ENCODE measurements at regions of chr19 and their contacts with region 1.

Region 1: DNA sequence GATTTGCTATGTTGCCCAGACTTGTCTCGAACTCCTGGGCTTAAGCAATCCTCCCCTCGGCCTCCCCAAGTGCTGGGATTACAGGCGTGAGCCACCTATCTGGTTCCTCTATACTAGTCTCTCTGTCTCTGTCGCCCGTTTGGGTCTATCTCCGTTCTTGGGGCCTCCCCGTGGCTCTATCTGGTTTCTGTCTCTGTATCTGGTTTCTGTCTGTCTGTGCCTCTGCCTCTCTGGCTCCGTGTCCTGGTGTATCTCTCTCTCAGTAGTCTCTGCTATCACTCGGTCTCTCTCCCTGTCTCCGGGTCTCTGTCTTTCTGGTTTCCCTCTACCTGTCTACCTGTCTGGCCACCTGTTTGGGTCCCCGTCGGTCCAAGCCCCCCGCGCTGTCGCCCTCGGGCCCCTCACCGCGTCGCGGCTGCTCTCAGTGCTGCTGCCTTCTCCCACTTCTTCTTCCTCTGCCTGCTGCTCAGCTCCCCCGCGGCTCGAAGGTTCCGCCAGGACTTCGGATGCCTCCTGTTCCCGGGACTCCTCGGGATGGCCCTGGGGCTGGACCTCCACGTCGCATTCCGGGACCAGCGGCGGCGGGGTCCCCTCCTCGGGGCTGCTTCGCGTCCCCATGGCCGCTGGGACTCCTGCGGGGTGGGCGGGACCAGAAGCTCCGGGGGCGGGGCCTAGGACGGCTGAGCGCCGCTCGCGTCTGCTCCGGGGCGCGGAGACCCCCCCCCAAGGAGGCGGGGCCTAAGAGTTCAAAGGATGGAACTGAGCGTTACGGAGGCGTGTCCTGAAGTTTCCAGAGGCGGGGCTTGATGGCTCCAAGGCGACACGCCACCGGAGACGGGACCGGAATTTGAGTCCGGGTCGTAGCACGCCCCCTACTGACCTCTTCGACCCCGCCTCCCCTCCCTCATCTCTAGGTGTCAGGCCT is 783 bp downstream of the PHLDB3 start:
- DNase-seq: peak; percentile 96
- H3K4me3 Mint-ChIP-seq: peak overlapping the region; percentile 87
- H3K27ac Mint-ChIP-seq: peak overlapping the region; percentile 93
- H3K4me1 Mint-ChIP-seq: peaks cover 20% of the 10 kb centered on the region
- H3K27me3 Mint-ChIP-seq: no peaks in the 10 kb centered on the region

Region 2: GRCh38 chr19:43474986-43475705 is 28.6 kb before region 1 on chr19:
- intact Hi-C with region 1: loop called (anchors 1 kb)
- DNase-seq: peak; percentile 89
- H3K4me3 Mint-ChIP-seq: peak overlapping the region; percentile 78
- H3K27ac Mint-ChIP-seq: peak overlapping the region; percentile 94
- H3K4me1 Mint-ChIP-seq: peaks cover 18% of the 10 kb centered on the region
- H3K27me3 Mint-ChIP-seq: no peaks in the 10 kb centered on the region